CD4-positive, alpha-beta T cell (primary cell): ENCODE measurements at regions of chr18 and their contacts with region 1.

Region 1: DNA sequence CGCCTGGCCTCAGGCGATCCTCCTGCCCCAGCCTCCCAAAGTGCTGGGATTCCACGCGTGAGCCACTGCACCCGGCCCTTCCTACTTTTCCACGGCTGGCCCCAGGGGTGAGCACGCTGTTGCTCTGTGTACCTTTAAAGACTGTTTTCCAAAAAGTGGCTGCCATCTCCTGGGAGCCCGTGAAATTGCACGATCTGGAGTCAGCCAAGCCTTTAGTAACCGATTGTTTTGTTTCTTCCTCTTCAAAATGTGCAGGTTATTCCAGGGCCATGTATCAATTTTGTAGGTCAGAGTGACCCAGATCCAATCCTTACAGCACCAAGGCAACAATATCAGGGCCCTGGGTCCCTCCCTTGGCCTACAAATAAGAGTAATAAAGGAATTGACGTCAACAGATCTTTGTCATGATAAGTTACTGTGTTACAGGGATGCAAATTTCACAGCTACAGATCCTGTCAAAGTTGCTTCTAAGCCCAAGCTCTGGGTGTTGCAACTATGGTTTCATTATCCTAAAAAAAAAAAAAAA is 135.6 kb upstream of the ZNF236 start:
- DNase-seq: peak in 7 of 14 experiments; percentile 5 to 38 (median 16)
- ATAC-seq: peak; percentile 64
- H3K4me3 ChIP-seq: no peak overlapping the region
- H3K4me3 Mint-ChIP-seq: no peak overlapping the region
- H3K27ac ChIP-seq: no peak overlapping the region
- H3K27ac Mint-ChIP-seq: no peak overlapping the region
- H3K4me1 ChIP-seq: peaks cover 3% of the 10 kb centered on the region
- H3K4me1 Mint-ChIP-seq: peaks cover 4% of the 10 kb centered on the region
- H3K27me3 ChIP-seq: peaks cover 0 to 6% of the 10 kb centered on the region in 2 experiments
- H3K27me3 Mint-ChIP-seq: peaks cover 44% of the 10 kb centered on the region
- CTCF ChIP-seq: peak; percentile 32

Region 2: GRCh38 chr18:76626991-76627390 is 59.8 kb before region 1 on chr18:
- CTCF ChIA-PET with region 1: no interaction called
- POLR2A ChIA-PET with region 1: no interaction called
- intact Hi-C with region 1: no loop called
- DNase-seq: no peak
- ATAC-seq: no peak
- H3K4me3 ChIP-seq: no peak overlapping the region
- H3K4me3 Mint-ChIP-seq: no peak overlapping the region
- H3K27ac ChIP-seq: no peak overlapping the region
- H3K27ac Mint-ChIP-seq: no peak overlapping the region
- H3K4me1 ChIP-seq: no peaks in the 10 kb centered on the region
- H3K4me1 Mint-ChIP-seq: no peaks in the 10 kb centered on the region
- H3K27me3 ChIP-seq: peaks cover 0 to 3% of the 10 kb centered on the region in 2 experiments
- H3K27me3 Mint-ChIP-seq: peaks cover 28% of the 10 kb centered on the region
- CTCF ChIP-seq: no peak

Region 3: DNA sequence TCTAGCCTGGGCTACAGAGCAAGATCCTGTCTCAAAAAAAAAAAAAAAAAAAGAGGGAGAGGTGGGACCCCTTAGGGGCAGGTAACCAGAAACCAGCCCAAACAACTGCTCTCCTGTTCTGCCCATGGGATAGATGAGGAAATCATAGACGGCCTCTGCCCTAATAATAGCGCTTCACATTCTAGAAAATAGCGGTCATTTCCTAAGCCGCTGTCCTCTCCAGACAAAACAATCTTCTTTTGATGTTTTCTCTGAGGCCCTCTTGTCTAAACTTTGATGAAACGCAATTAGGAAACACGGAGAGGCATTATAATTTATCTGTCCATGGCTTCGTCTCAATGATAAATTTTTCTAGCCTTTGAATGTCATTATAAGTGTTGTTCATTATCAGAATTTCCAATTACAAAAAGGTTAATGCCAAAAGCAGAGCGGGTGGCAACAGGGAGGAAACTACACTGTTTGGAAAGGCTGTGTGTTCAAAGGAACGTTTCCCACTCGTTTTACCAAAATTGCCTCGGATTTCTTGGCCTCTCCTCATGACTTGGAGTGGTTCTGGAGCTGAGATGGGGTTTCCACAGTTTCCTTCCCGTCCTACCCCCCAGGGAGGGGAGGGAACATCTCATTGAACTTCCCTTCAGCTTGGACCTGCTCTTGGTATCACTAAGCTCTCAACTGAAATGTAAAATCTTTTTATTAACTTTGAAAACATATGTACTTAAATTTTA is 16.1 kb before region 1 on chr18:
- CTCF ChIA-PET with region 1: no interaction called
- POLR2A ChIA-PET with region 1: no interaction called
- intact Hi-C with region 1: loop called in 1 of 2 experiments (anchors 2 kb)
- DNase-seq: no peak
- ATAC-seq: no peak
- H3K4me3 ChIP-seq: no peak overlapping the region
- H3K4me3 Mint-ChIP-seq: no peak overlapping the region
- H3K27ac ChIP-seq: no peak overlapping the region
- H3K27ac Mint-ChIP-seq: no peak overlapping the region
- H3K4me1 ChIP-seq: no peaks in the 10 kb centered on the region
- H3K4me1 Mint-ChIP-seq: no peaks in the 10 kb centered on the region
- H3K27me3 ChIP-seq: peaks cover 0 to 4% of the 10 kb centered on the region in 2 experiments
- H3K27me3 Mint-ChIP-seq: peaks cover 8% of the 10 kb centered on the region
- CTCF ChIP-seq: no peak